Transverse colon (tissue), 4 donors: ENCODE measurements at regions of chr17 and their contacts with region 1.

Region 1: GRCh38 chr17:6179017-6179416 is 108.8 kb downstream of the WSCD1 start:
- DNase-seq: no peak
- H3K4me3 ChIP-seq: no peak overlapping the region
- H3K27ac ChIP-seq: no peak overlapping the region
- H3K4me1 ChIP-seq: no peaks in the 10 kb centered on the region
- H3K27me3 ChIP-seq: no peaks in the 10 kb centered on the region
- CTCF ChIP-seq: no peak
- EP300 ChIP-seq: no peak
- POLR2A ChIP-seq: no peak

Region 2: GRCh38 chr17:4594931-4595684 is 1583.9 kb before region 1 on chr17:
- in situ Hi-C with region 1: no loop called
- intact Hi-C with region 1: loop called (anchors 5 kb)
- DNase-seq: peak; percentile 53
- H3K4me3 ChIP-seq: no peak overlapping the region
- H3K27ac ChIP-seq: no peak overlapping the region
- H3K4me1 ChIP-seq: peaks cover 0 to 9% (median 0%) of the 10 kb centered on the region in 4 donors
- H3K27me3 ChIP-seq: no peaks in the 10 kb centered on the region
- CTCF ChIP-seq: peak; percentile 25 to 51 (median 33)
- EP300 ChIP-seq: no peak
- POLR2A ChIP-seq: no peak